ENCODE measurements at regions of chr12 and their contacts with region 1.

Region 1: GRCh38 chr12:94133964-94134795 is 14.2 kb upstream of the PLXNC1 start:
- DNase-seq: peak in 1 of 2 donors; percentile 21
- ATAC-seq: peak in 7 of 8 donors; percentile 26 to 82 (median 74)
- H3K4me3 ChIP-seq: no peak overlapping the region
- H3K27ac ChIP-seq: no peak overlapping the region
- H3K4me1 ChIP-seq: peaks cover 0 to 3% (median 0%) of the 10 kb centered on the region in 9 donors
- H3K27me3 ChIP-seq: peaks cover 0 to 9% (median 1%) of the 10 kb centered on the region in 7 donors
- CTCF ChIP-seq: peak; percentile 76 to 89 (median 83)

Region 2: GRCh38 chr12:93677195-93678064 is 456.8 kb before region 1 on chr12 and contains the start of gene CRADD:
- intact Hi-C with region 1: no loop called
- DNase-seq: peak; percentile 67 to 93
- ATAC-seq: peak; percentile 91 to 97 (median 94)
- H3K4me3 ChIP-seq: peak within 1 kb of the TSS; percentile 48 to 80 (median 66)
- H3K27ac ChIP-seq: peak within 1 kb of the TSS; percentile 86 to 99 (median 98)
- H3K4me1 ChIP-seq: peaks cover 0 to 51% (median 27%) of the 10 kb centered on the region in 9 donors
- H3K27me3 ChIP-seq: no peaks in the 10 kb centered on the region
- CTCF ChIP-seq: no peak
- total RNA-seq, gene CRADD: 36.3 to 80.1 (median 60.2) TPM

Region 3: GRCh38 chr12:94039914-94040313 is 94.3 kb before region 1 on chr12:
- intact Hi-C with region 1: no loop called
- DNase-seq: no peak
- ATAC-seq: peak in 7 of 8 donors; percentile 23 to 78 (median 59)
- H3K4me3 ChIP-seq: no peak overlapping the region
- H3K27ac ChIP-seq: peak overlapping the region in 2 of 10 donors; percentile 20 to 57
- H3K4me1 ChIP-seq: peaks cover 0 to 14% (median 0%) of the 10 kb centered on the region in 9 donors
- H3K27me3 ChIP-seq: no peaks in the 10 kb centered on the region
- CTCF ChIP-seq: no peak

Region 4: GRCh38 chr12:94149119-94149780 is 15.1 kb after region 1 on chr12:
- intact Hi-C with region 1: no loop called
- DNase-seq: peak; percentile 20 to 45
- ATAC-seq: peak; percentile 14 to 65 (median 40)
- H3K4me3 ChIP-seq: peak overlapping the region; percentile 40 to 78 (median 66)
- H3K27ac ChIP-seq: peak overlapping the region in 3 of 10 donors; percentile 9 to 87 (median 26)
- H3K4me1 ChIP-seq: peaks cover 5 to 52% (median 18%) of the 10 kb centered on the region in 9 donors
- H3K27me3 ChIP-seq: peaks cover 0 to 27% (median 12%) of the 10 kb centered on the region in 7 donors
- CTCF ChIP-seq: peak in 7 of 9 donors; percentile 24 to 57 (median 49)

Region 5: DNA sequence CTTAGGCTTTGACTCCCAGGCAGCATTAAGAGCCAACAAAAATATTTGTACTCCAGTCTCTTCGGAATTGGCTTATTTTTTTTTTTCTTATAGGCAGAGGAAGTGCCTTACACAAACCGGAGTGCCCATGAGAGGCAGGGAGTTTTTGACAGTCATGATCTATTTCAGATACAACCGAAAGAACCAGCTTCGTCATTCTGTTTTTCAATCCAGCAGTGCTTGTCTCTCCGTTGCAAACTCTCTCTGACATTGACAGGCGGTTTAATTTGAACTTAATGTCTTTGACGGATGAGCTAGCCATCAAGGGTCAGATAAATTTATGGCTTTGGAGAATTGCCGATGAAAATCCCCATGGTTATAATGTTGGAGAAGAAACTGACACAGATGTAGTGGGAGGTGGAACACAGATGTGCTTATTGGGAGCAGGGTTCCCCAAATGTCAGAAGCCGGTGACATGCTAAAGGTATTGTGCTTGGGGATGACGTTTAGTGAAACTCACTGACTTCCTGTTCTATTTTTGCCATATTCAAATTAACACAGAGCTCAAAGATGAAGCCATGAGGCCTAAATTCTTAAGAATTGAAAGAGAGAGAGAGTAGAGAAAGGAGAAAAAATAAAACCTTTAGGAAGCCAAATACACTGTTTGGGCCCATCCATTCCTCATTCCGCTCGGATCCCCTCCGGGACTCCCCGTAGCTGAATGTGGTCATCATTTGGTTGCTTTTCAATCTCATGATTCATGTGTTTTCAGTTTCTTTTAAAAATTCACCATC is 73.9 kb after region 1 on chr12:
- intact Hi-C with region 1: no loop called
- DNase-seq: peak in 1 of 2 donors; percentile 13
- ATAC-seq: peak in 7 of 8 donors; percentile 22 to 76 (median 65)
- H3K4me3 ChIP-seq: peak overlapping the region in 6 of 10 donors; percentile 11 to 40 (median 24)
- H3K27ac ChIP-seq: peak overlapping the region in 9 of 10 donors; percentile 7 to 89 (median 51)
- H3K4me1 ChIP-seq: peaks cover 0 to 52% (median 17%) of the 10 kb centered on the region in 9 donors
- H3K27me3 ChIP-seq: no peaks in the 10 kb centered on the region
- CTCF ChIP-seq: no peak

Region 6: DNA sequence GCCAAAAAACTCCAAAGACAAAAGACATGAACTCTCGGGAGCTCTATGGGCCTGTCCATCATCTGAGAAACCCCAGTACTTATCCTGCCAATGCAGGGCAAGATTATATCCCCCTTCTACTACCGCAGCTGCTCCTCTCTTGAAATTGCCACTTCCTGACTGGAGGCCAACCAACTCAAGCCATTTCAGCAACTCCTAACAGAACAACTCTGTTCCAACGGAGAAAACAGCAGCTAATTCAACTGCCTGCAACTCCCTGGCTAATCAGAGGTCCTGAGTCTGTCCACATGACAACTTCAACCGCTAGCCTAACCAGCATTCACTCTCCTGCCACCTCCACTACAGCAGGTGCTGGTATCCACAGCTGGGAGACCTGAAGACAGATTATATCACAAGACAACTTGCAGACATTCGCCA is 301.3 kb after region 1 on chr12:
- intact Hi-C with region 1: loop called in 2 of 10 experiments (anchors 5 to 10 kb)
- DNase-seq: no peak
- ATAC-seq: peak in 7 of 8 donors; percentile 10 to 64 (median 25)
- H3K4me3 ChIP-seq: no peak overlapping the region
- H3K27ac ChIP-seq: no peak overlapping the region
- H3K4me1 ChIP-seq: peaks cover 0 to 15% (median 8%) of the 10 kb centered on the region in 9 donors
- H3K27me3 ChIP-seq: no peaks in the 10 kb centered on the region
- CTCF ChIP-seq: no peak

Measured in heart right ventricle (tissue), 16 donors.